CD14-positive monocyte (primary cell): ENCODE measurements at regions of chr17 and their contacts with region 1.

Region 1: DNA sequence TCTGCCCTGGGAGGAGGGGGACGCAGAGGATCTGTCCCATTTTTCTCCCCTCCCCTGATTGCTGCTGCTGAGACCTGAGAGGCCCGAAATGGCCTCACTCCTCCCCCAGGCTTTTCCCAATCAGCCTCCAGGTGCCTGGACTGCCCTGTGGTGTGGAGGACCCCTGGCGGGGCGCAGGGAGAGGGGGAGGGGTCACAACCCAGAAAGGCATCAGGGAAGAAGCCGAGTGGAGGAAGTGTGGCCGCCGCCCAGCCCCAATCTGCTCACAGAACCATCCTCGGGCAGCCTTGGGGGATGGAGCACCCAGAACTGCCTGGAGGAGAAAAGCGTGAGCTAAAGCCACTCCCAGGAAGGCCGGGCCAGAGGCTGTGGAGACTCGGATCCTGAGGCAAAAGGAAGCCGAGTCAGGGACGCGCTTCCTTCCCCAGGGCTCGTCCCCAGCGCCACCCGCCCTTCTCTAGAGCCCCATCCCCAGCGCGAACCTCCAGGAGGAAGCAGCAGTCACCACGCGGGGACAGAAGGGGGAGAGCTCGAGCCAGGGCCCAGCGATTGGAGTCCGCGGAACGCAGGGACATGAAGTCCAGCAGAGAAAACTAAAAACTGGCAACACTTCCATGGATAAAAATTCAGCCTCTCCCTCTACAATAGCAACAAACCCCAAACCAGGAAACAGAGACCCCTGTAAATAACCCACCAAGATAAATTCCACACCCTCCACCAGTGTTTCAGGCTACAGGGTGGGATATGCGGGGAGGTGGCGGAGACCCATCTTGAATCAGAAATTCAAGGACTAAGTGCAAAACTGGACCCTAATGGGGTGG is 116.3 kb upstream of the METRNL start:
- DNase-seq: peak; percentile 80 to 82 (median 81)
- H3K4me3 ChIP-seq: peak overlapping the region in 2 of 3 experiments; percentile 4 to 70
- H3K4me3 Mint-ChIP-seq: peak overlapping the region; percentile 71 to 83
- H3K27ac ChIP-seq: peak overlapping the region; percentile 10 to 59
- H3K27ac Mint-ChIP-seq: peak overlapping the region; percentile 33 to 91 (median 65)
- H3K4me1 ChIP-seq: peaks cover 14 to 19% of the 10 kb centered on the region in 2 donors
- H3K4me1 Mint-ChIP-seq: peaks cover 31% of the 10 kb centered on the region
- H3K27me3 ChIP-seq: no peaks in the 10 kb centered on the region
- H3K27me3 Mint-ChIP-seq: no peaks in the 10 kb centered on the region
- CTCF ChIP-seq: peak; percentile 86

Region 2: GRCh38 chr17:82781894-82782274 is 181.2 kb before region 1 on chr17:
- intact Hi-C with region 1: loop called in 1 of 2 experiments (anchors 1 kb)
- DNase-seq: peak; percentile 79 to 82 (median 80)
- H3K4me3 ChIP-seq: no peak overlapping the region
- H3K4me3 Mint-ChIP-seq: peak overlapping the region in 1 of 2 donors; percentile 62
- H3K27ac ChIP-seq: no peak overlapping the region
- H3K27ac Mint-ChIP-seq: peak overlapping the region in 2 of 7 donors; percentile 69 to 71
- H3K4me1 ChIP-seq: peaks cover 10 to 11% of the 10 kb centered on the region in 2 donors
- H3K4me1 Mint-ChIP-seq: peaks cover 13% of the 10 kb centered on the region
- H3K27me3 ChIP-seq: no peaks in the 10 kb centered on the region
- H3K27me3 Mint-ChIP-seq: peaks cover 0 to 3% (median 2%) of the 10 kb centered on the region in 3 donors
- CTCF ChIP-seq: peak; percentile 98

Region 3: GRCh38 chr17:83051395-83052233 is 88.5 kb after region 1 on chr17:
- intact Hi-C with region 1: loop called in 1 of 2 experiments (anchors 5 kb)
- DNase-seq: peak; percentile 97 to 98 (median 97)
- H3K4me3 ChIP-seq: peak overlapping the region; percentile 29 to 74 (median 41)
- H3K4me3 Mint-ChIP-seq: peak overlapping the region; percentile 65 to 74
- H3K27ac ChIP-seq: peak overlapping the region; percentile 91 to 94
- H3K27ac Mint-ChIP-seq: peak overlapping the region; percentile 89 to 99 (median 98)
- H3K4me1 ChIP-seq: peaks cover 64 to 80% of the 10 kb centered on the region in 2 donors
- H3K4me1 Mint-ChIP-seq: peaks cover 60% of the 10 kb centered on the region
- H3K27me3 ChIP-seq: no peaks in the 10 kb centered on the region
- H3K27me3 Mint-ChIP-seq: peaks cover 0 to 9% (median 1%) of the 10 kb centered on the region in 3 donors
- CTCF ChIP-seq: no peak

Region 4: DNA sequence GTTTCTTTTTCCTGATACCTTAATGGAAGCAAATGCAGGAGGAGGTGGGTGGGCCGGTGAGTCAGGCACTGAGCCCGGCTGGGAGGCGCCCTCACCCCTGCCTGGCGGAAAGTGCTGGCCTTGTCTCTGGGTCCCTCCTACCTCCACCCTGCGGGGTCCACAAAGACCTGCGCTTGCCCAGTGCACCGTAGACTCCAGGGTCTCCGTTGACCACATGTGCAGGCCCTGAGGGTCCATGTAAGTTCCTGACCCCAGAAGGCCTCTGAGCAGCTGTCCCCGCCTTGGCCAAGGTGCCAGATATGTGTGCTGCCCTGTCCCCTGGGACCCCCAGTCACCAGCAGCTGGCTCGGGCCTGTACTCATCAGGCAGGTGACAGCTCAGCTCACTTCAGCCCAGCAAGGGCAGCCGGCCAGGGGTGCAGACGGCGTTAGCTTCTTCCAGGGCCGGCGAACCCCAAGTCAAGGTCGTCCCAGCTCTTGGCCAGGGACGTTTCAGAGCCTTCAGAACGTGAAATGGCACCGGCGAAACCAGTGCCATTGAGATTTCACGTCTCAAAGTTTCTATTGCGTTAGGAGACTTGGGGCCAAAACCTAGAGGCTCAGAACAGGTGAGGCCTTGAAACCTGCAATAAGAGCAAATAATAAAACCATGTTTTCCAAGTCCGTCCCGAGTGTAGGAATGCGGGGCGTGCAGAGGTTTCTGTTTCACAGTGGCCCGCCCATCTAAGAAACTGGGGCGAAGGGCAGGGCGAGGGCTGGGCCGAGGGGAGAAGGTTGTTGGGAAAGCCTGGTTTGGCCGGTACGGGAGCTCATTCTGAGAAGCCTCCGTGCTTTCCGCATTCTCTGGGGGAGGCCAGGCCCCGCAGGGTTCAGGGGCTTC is 128.4 kb after region 1 on chr17:
- intact Hi-C with region 1: loop called in 1 of 2 experiments (anchors 5 kb)
- DNase-seq: no peak
- H3K4me3 ChIP-seq: no peak overlapping the region
- H3K4me3 Mint-ChIP-seq: no peak overlapping the region
- H3K27ac ChIP-seq: no peak overlapping the region
- H3K27ac Mint-ChIP-seq: peak overlapping the region in 3 of 7 donors; percentile 24 to 56 (median 40)
- H3K4me1 ChIP-seq: peaks cover 23 to 39% of the 10 kb centered on the region in 2 donors
- H3K4me1 Mint-ChIP-seq: peaks cover 34% of the 10 kb centered on the region
- H3K27me3 ChIP-seq: peaks cover 0 to 5% of the 10 kb centered on the region in 2 donors
- H3K27me3 Mint-ChIP-seq: peaks cover 0 to 3% (median 0%) of the 10 kb centered on the region in 3 donors
- CTCF ChIP-seq: no peak